ENCODE measurements at regions of chr7 and their contacts with region 1.

Region 1: GRCh38 chr7:151782598-151783448 is 94.1 kb downstream of the PRKAG2 start:
- DNase-seq: peak; percentile 77
- H3K4me3 Mint-ChIP-seq: peak overlapping the region; percentile 77
- H3K27ac Mint-ChIP-seq: no peak overlapping the region
- H3K4me1 Mint-ChIP-seq: peaks cover 2% of the 10 kb centered on the region
- H3K27me3 Mint-ChIP-seq: no peaks in the 10 kb centered on the region

Region 2: GRCh38 chr7:151198945-151199848 is 583.6 kb before region 1 on chr7:
- CTCF ChIA-PET with region 1: no interaction called
- intact Hi-C with region 1: no loop called
- DNase-seq: no peak
- H3K4me3 Mint-ChIP-seq: no peak overlapping the region
- H3K27ac Mint-ChIP-seq: no peak overlapping the region
- H3K4me1 Mint-ChIP-seq: no peaks in the 10 kb centered on the region
- H3K27me3 Mint-ChIP-seq: peaks cover 4% of the 10 kb centered on the region

Region 3: DNA sequence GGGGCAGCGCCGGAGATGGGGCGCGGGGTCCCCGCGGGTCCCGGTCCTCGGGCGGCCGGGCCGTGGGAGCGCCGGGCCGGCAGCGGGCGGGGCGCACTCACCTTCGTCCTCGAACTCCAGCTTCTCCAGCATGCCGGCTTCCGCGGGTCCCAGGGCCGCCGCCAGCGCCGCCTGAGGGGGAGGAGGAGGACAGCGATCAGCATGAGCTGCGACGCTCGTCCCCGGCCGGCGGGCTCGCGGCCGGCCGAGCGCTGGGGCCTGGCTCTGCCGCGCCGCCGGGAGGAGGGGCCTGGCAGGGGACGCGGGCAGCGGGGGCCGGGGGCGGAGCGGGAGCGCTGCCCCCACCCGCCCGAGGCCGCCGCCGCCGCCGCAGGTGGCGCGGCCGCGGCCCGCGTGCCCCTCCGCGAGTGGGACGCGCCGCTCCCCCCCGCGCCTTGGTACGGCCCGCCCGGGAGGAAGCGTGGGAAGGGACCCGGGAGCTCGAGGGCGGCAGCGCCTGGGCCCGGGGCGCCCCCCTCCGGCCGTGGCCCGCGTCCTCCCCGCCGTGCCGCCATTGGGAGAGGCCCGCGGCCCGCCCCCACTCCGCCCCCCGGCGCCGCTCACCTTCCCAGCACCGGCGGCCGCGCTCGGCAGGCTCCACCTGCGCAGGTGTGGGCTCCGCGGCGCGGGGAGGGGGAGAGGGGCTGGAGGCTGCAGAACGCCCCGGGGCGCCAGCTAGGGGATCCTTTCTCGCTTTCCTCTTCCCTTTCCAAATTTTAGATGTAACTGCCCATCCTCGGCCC is 150.7 kb before region 1 on chr7:
- CTCF ChIA-PET with region 1: interaction called, 10 read pairs
- intact Hi-C with region 1: no loop called
- DNase-seq: peak; percentile 87
- H3K4me3 Mint-ChIP-seq: peak overlapping the region; percentile 95
- H3K27ac Mint-ChIP-seq: peak overlapping the region; percentile 99
- H3K4me1 Mint-ChIP-seq: peaks cover 23% of the 10 kb centered on the region
- H3K27me3 Mint-ChIP-seq: no peaks in the 10 kb centered on the region

Region 4: DNA sequence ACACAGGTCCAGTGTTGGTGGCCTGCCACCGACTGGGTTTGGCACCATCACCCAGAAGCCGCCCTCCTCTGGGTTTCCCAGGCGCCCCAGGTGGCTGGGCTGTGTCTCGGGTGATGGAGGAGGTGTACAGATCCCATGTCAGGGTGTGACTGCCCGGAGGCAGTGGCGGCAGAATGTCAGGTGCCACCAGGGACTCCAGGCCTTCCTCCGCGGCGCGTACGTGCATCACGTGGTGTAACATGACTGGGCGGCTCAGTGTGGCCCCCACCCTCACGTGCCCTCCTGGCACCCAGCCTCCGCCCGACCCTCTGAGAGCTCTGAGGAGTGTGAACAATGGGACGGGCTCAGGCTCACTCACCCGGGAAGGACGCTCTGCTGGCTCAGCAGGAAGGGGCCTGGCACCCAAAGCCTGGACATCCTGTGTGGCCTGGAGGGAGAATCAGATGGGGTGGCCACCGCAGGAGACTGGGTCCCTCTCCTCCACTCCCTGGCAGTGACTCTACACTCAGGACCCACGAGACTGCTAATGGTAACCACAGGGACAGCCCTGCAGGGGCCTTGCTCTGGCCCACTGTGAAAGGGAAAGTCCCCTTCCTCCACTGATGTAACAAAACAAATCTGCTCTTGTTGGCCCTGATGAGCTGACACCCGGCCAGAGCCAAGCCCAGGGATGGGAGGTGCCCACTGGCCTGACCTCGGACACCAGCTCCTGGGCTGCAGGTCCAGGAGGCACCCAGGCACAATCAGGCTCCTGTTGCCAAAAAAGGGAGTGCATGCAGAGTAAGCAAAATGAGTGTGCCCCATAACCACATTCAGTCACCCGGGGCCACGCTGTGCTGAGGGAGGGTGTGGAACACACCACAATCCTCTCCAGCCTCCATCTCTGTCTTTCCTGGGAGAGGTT is 70.7 kb before region 1 on chr7:
- CTCF ChIA-PET with region 1: no interaction called
- intact Hi-C with region 1: no loop called
- DNase-seq: no peak
- H3K4me3 Mint-ChIP-seq: no peak overlapping the region
- H3K27ac Mint-ChIP-seq: no peak overlapping the region
- H3K4me1 Mint-ChIP-seq: no peaks in the 10 kb centered on the region
- H3K27me3 Mint-ChIP-seq: no peaks in the 10 kb centered on the region

Region 5: GRCh38 chr7:151769188-151769841 is 13.5 kb before region 1 on chr7:
- CTCF ChIA-PET with region 1: interaction called, 45 read pairs
- intact Hi-C with region 1: loop called (anchors 1 kb)
- DNase-seq: peak; percentile 62
- H3K4me3 Mint-ChIP-seq: peak overlapping the region; percentile 10
- H3K27ac Mint-ChIP-seq: peak overlapping the region; percentile 86
- H3K4me1 Mint-ChIP-seq: peaks cover 51% of the 10 kb centered on the region
- H3K27me3 Mint-ChIP-seq: no peaks in the 10 kb centered on the region

Region 6: DNA sequence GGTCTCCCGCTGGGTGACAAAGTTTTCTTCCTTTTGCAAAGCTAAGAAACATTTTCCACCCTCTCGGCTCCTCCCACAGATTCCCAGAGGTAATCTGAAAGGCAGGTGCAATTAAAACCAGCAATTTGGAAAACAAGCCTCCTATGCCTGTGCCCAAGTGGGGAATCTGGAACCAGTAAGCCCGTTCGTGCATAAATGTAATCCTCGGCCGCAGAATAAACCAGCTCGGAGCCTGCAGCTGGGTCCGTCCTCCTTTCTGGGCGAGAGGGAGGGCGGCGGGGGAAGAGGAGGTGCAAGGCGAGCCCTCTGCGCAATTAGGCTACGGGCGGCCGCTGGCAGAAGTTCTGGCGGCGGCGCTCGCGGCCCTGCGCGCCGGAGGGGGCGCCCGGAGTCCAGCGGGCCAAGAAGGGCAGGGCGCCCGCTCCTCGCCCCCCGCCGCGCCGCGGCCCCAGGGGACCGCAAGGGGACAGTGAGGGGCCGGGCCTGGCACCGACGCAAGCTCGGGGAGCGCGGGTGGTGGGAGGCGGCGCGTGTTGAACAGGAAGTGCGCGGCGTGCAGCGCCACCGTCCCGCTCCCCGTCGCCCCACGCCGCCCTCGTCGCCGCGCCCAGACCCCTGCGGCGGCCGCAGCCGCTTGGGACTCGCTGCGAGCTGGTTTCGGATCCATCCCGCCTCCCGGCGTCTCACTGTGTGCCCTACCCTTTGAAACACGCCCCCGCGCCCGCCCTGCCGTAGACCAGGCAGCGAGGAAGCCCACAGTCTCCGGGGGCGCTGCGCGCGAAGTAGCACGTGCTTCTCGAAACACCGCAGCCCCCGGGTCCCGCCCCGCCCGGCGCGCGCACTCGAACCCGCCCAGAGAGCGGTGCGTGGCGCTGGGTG is 94.3 kb after region 1 on chr7 and contains the start of gene PRKAG2:
- CTCF ChIA-PET with region 1: interaction called, 9 read pairs
- intact Hi-C with region 1: loop called (anchors 1 kb)
- DNase-seq: peak; percentile 63
- H3K4me3 Mint-ChIP-seq: peak within 1 kb of the TSS; percentile 96
- H3K27ac Mint-ChIP-seq: peak within 1 kb of the TSS; percentile 81
- H3K4me1 Mint-ChIP-seq: peaks cover 10% of the 10 kb centered on the region
- H3K27me3 Mint-ChIP-seq: no peaks in the 10 kb centered on the region
- total RNA-seq, gene PRKAG2: 16.9 to 18.7 TPM

Region 7: GRCh38 chr7:152025077-152025936 is 242.5 kb after region 1 on chr7 and contains the start of gene GALNT11:
- CTCF ChIA-PET with region 1: interaction called, 4 read pairs
- intact Hi-C with region 1: loop called (anchors 1 kb)
- DNase-seq: peak; percentile 81
- H3K4me3 Mint-ChIP-seq: peak within 1 kb of the TSS; percentile 80
- H3K27ac Mint-ChIP-seq: peak within 1 kb of the TSS; percentile 77
- H3K4me1 Mint-ChIP-seq: peaks cover 30% of the 10 kb centered on the region
- H3K27me3 Mint-ChIP-seq: no peaks in the 10 kb centered on the region
- total RNA-seq, gene GALNT11: 15.6 to 19.8 TPM